ENCODE measurements at regions of chr11 and their contacts with region 1.

Region 1: GRCh38 chr11:19553683-19554333 is 158.8 kb upstream of the NAV2 start:
- DNase-seq: peak; percentile 81
- H3K4me3 Mint-ChIP-seq: no peak overlapping the region
- H3K27ac Mint-ChIP-seq: no peak overlapping the region
- H3K4me1 Mint-ChIP-seq: no peaks in the 10 kb centered on the region
- H3K27me3 Mint-ChIP-seq: peaks cover 23% of the 10 kb centered on the region

Region 2: GRCh38 chr11:19071255-19071654 is 482.6 kb before region 1 on chr11:
- CTCF ChIA-PET with region 1: interaction called, 10 read pairs
- DNase-seq: peak; percentile 66
- H3K4me3 Mint-ChIP-seq: no peak overlapping the region
- H3K27ac Mint-ChIP-seq: no peak overlapping the region
- H3K4me1 Mint-ChIP-seq: peaks cover 4% of the 10 kb centered on the region
- H3K27me3 Mint-ChIP-seq: peaks cover 9% of the 10 kb centered on the region

Region 3: DNA sequence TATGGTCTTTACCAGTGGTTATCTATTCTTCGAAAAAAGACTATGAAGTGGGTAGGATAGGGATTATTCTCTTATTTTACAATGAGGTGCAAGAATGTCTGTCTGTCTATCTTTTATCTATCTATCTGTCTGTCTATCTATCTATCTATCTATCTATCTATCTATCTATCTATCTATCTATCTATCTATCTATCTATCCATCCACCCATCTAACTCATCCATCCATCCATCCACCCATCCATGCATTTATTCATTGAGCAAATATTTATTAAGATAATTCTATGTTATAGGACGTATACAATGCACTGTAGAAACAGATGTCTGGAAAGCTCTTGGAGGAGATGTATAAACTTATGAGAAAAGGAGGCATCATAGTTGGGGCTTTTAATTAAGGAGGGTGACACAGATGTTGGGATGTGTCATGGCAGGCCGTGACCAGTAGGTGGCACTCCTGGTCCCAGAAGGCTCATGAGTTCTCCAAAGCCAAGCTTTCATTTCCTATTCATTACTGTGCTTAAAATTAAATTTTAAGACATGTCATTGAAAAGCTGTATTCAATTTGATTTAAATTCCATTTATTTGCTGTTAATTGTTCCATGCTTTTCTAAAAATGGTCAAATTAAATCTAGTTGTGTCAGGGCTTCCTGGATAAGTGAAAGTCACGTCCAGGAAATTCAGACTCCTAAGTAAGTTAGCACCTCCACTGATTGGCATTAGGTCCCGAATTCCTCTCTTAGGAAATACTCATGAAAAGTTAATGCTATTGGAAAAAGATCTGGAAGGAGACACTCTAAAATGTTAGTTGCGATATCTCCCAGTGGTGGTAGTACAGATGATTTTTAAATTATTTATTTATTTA is 294.1 kb before region 1 on chr11:
- CTCF ChIA-PET with region 1: interaction called, 15 read pairs
- DNase-seq: peak; percentile 79
- H3K4me3 Mint-ChIP-seq: no peak overlapping the region
- H3K27ac Mint-ChIP-seq: no peak overlapping the region
- H3K4me1 Mint-ChIP-seq: no peaks in the 10 kb centered on the region
- H3K27me3 Mint-ChIP-seq: peaks cover 16% of the 10 kb centered on the region

Region 4: GRCh38 chr11:19441752-19442553 is 111.9 kb before region 1 on chr11:
- CTCF ChIA-PET with region 1: no interaction called
- DNase-seq: no peak
- H3K4me3 Mint-ChIP-seq: no peak overlapping the region
- H3K27ac Mint-ChIP-seq: no peak overlapping the region
- H3K4me1 Mint-ChIP-seq: no peaks in the 10 kb centered on the region
- H3K27me3 Mint-ChIP-seq: peaks cover 3% of the 10 kb centered on the region

Region 5: GRCh38 chr11:19698493-19699292 is 144.9 kb after region 1 on chr11:
- CTCF ChIA-PET with region 1: no interaction called
- DNase-seq: no peak
- H3K4me3 Mint-ChIP-seq: no peak overlapping the region
- H3K27ac Mint-ChIP-seq: no peak overlapping the region
- H3K4me1 Mint-ChIP-seq: no peaks in the 10 kb centered on the region
- H3K27me3 Mint-ChIP-seq: peaks cover 46% of the 10 kb centered on the region

Region 6: GRCh38 chr11:19742588-19743292 is 188.9 kb after region 1 on chr11:
- CTCF ChIA-PET with region 1: interaction called, 11 read pairs
- DNase-seq: peak; percentile 79
- H3K4me3 Mint-ChIP-seq: no peak overlapping the region
- H3K27ac Mint-ChIP-seq: no peak overlapping the region
- H3K4me1 Mint-ChIP-seq: no peaks in the 10 kb centered on the region
- H3K27me3 Mint-ChIP-seq: peaks cover 21% of the 10 kb centered on the region